Posterior vena cava (tissue), 2 donors: ENCODE measurements at regions of chr15 and their contacts with region 1.

Region 1: DNA sequence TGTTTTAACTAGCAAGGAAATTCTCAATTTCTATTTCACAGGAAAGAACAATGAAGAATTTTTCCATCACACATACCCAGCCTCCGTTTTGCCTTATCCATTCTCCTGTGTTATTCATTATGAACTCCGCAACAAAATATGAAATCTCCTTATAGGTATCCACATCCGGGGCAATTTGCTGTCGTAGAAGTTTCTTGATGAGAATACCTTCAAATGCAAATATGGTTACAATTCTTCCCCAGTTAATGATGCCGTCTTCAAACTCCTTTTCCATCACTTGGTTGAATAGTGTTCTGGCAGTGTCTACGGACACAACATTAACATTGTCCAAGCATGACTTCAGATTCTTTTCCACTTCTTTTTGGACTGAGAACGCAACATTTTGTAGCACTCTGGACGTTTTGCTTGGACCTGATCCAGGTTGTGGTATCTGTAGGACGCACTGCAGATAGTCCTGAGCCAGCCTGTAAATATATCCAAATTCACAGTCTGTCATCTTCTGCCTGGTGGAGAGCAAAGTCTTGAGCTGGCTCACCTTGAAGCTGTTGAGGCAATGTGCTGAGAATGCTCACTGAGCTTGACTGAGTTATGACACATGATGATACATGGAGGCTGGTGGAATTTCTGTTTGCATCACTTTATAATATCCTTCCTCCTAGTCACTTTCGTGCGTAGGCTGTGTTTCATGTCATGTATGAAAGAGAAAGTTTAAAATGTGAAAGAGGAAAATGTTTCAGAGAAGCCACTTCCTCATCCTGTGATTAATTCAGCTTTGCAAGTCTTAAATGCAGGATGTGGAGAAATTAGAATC is at the start of gene BCL2A1:
- DNase-seq: no peak
- total RNA-seq, gene BCL2A1: 3.6 to 4.5 TPM

Region 2: GRCh38 chr15:79878078-79878705 is 92.6 kb before region 1 on chr15:
- intact Hi-C with region 1: loop called in 1 of 2 experiments (anchors 5 kb)
- DNase-seq: no peak

Region 3: GRCh38 chr15:79923515-79924395 is 47.1 kb before region 1 on chr15:
- intact Hi-C with region 1: loop called in 1 of 2 experiments (anchors 2 kb)
- DNase-seq: peak; percentile 98